Ovary (tissue), 10 donors: ENCODE measurements at regions of chr3 and their contacts with region 1.

Region 1: DNA sequence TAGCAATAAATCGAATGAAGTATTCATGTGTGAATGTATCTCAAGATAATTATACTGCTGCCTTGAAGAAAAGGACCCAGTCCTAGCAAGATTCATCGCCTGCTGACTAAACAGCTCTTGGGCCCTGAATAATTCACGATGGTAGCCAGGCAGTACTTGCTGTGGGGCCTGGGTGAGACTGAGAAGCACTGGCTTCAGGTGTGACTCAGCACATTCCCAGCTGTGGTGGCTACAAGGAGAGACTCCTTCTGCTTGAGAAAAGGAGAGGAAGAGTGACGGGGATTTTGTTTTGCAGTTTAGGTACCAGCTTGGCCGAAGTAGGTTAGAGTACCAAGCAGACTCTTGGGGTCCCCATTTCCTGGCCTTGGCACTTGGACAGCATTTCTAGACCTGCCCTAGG is 47.6 kb upstream of the CD200R1L start:
- DNase-seq: no peak
- H3K4me3 ChIP-seq: no peak overlapping the region
- H3K27ac ChIP-seq: no peak overlapping the region
- H3K4me1 ChIP-seq: no peaks in the 10 kb centered on the region
- H3K27me3 ChIP-seq: no peaks in the 10 kb centered on the region
- CTCF ChIP-seq: no peak
- EP300 ChIP-seq: no peak
- POLR2A ChIP-seq: no peak

Region 2: GRCh38 chr3:112814266-112814665 is 80.0 kb before region 1 on chr3:
- intact Hi-C with region 1: loop called in 1 of 4 experiments (anchors 2 kb)
- DNase-seq: no peak
- H3K4me3 ChIP-seq: no peak overlapping the region
- H3K27ac ChIP-seq: no peak overlapping the region
- H3K4me1 ChIP-seq: peaks cover 11% of the 10 kb centered on the region
- H3K27me3 ChIP-seq: no peaks in the 10 kb centered on the region
- CTCF ChIP-seq: peak in 2 of 3 donors; percentile 29 to 41
- EP300 ChIP-seq: no peak
- POLR2A ChIP-seq: no peak